RWPE1 (cell line): ENCODE measurements at regions of chr9 and their contacts with region 1.

Region 1: GRCh38 chr9:35790385-35791296 is 750 bp upstream of the NPR2 start:
- DNase-seq: peak; percentile 91
- H3K27ac ChIP-seq: peak overlapping the region; percentile 68
- CTCF ChIP-seq: peak; percentile 97

Region 2: GRCh38 chr9:35423499-35423898 is 367.1 kb before region 1 on chr9:
- CTCF ChIA-PET with region 1: no interaction called
- POLR2A ChIA-PET with region 1: no interaction called
- DNase-seq: no peak
- H3K27ac ChIP-seq: no peak overlapping the region
- CTCF ChIP-seq: no peak

Region 3: DNA sequence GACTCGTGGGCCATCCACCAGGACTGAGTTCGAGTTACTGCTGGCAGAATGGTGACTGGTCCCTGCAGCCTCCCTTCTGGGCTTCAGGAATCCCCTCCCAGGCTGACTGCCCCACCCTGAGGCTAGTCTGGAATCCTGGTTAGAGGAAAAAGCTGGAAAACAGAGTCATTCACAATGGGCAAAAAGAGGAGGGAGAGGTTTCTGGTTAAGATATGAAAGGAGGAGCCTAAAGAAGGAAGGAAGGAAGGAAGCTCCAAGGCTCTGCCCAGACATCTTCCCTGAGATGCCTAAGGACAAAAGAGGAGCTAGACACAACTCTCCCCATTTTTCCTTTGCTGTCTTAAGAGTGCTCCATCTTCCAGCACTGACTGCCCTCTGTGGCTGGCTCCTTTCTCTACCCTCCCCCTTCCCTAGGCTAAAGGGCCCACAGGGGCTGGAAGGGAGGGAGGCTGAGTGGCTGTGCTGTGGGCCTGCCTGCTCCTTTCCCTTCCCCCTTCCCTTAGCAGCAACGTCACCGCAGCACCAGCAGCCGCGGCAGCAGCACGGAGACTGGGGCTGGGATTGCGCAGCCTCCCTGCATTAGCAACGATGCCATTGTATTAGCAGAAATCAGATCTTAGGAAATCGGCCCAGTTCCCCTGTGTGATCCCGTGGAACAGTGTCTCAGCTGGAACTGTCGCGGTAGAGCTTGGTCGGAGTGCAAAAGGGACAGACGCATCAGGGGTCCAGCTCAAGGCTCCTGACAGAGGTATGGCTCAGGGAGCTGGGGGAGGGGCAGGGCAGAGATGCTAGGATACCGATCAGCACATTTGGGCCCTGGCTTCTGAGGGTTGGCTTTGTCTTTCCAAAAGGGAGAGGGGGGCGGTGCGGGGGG is 252.0 kb before region 1 on chr9:
- CTCF ChIA-PET with region 1: no interaction called
- POLR2A ChIA-PET with region 1: no interaction called
- DNase-seq: no peak
- H3K27ac ChIP-seq: peak overlapping the region; percentile 76
- CTCF ChIP-seq: no peak

Region 4: DNA sequence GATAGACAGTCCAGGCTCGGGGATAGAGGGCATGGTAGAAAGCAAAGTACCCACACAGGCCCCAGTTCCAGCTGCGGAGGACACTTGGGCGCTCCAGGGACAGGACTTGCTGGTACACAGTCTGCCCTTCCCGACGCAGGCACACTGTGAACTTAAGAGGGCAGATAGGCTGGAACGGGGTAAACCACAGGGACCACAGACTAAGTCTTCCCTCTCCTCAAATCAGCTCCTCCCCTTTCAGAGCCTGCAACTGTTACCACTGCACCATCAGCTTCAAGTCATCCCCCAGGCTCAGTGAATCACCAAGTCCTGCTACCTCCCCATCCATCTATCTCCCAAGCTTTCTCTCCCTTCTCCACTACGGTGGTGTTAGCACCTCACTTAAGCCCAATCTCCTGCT is 48.9 kb before region 1 on chr9:
- CTCF ChIA-PET with region 1: no interaction called
- POLR2A ChIA-PET with region 1: no interaction called
- DNase-seq: no peak
- H3K27ac ChIP-seq: peak overlapping the region; percentile 5; the same call in 1 of the 2 replicates
- CTCF ChIP-seq: no peak

Region 5: GRCh38 chr9:35805551-35805950 is 14.9 kb after region 1 on chr9:
- CTCF ChIA-PET with region 1: interaction called, 10 read pairs
- POLR2A ChIA-PET with region 1: no interaction called
- DNase-seq: no peak
- H3K27ac ChIP-seq: no peak overlapping the region
- CTCF ChIP-seq: no peak

Region 6: GRCh38 chr9:35835216-35835632 is 44.6 kb after region 1 on chr9:
- CTCF ChIA-PET with region 1: no interaction called
- POLR2A ChIA-PET with region 1: no interaction called
- DNase-seq: no peak
- H3K27ac ChIP-seq: no peak overlapping the region
- CTCF ChIP-seq: no peak

Region 7: DNA sequence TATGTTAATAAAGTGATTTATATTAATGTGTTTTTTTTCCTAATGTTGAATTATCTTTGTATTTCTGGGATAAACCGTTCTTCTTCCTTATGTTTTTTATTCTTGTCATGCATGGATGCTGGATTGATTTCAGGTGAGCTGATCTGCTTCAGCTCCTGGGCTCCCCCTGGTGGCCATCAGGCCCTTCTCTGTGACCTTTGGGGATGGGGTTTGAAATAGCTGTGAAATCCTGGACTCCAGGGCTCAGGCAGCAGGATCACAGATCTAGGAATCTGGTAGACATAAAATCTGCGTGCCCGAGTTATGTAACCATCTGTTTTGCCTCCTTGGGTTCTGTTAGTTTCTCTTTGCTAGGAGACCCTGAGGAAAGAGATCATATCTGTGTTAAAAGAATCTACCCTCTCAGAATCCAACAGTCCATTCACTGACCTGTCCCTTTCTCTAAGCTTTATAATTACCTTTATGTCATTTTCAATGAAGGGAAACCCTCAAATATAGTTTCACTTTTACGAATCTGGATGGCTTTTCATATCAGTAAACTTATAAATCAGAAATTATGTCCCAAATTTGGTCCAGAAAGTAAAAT is 91.7 kb after region 1 on chr9:
- CTCF ChIA-PET with region 1: interaction called, 25 read pairs
- POLR2A ChIA-PET with region 1: interaction called, 3 read pairs
- DNase-seq: peak; percentile 89
- H3K27ac ChIP-seq: no peak overlapping the region
- CTCF ChIP-seq: peak; percentile 100